Astrocyte of the cerebellum (primary cell): ENCODE measurements at regions of chr1 and their contacts with region 1.

Region 1: DNA sequence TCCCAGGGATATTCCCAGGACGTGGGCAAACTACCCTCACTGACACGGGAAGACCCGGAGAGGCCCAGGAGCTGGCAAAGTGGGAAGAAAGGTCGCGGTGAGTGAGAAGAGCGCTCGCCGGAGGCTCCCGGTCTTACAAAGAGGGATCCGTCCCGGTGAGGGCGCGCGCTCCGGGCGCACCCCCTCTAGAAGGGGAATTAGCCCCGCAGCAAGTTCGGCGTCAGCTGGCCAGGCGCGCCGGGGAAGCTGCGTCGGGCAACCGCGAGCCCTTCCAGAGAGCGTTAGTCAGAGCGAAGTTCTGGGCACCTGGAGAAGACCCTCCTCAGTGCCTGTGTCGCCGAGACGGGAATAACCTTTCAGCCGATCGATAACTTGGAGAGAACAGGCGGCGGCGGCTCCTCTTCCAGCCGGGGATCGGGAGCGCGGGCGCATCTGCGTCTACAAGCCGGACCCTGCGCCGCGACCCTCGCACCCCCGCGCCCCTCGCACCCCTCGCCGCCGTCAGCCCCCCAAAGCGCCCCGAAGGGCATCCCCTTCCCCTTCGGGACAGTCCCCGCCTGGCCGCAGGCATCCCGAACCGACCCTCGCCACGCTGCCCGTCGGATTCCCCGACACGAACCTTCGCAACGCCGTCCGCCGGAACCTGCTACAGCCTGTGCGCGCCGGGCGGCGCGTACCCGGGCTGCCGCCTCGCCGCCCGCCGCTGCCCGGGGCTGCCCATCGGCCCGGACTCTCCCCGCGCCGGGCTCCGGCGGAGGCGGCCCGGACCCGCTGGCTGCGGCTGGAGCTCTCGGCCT is 485 bp downstream of the SIPA1L2 start:
- DNase-seq: no peak
- H3K4me3 ChIP-seq: peak overlapping the region; percentile 50
- CTCF ChIP-seq: no peak

Region 2: DNA sequence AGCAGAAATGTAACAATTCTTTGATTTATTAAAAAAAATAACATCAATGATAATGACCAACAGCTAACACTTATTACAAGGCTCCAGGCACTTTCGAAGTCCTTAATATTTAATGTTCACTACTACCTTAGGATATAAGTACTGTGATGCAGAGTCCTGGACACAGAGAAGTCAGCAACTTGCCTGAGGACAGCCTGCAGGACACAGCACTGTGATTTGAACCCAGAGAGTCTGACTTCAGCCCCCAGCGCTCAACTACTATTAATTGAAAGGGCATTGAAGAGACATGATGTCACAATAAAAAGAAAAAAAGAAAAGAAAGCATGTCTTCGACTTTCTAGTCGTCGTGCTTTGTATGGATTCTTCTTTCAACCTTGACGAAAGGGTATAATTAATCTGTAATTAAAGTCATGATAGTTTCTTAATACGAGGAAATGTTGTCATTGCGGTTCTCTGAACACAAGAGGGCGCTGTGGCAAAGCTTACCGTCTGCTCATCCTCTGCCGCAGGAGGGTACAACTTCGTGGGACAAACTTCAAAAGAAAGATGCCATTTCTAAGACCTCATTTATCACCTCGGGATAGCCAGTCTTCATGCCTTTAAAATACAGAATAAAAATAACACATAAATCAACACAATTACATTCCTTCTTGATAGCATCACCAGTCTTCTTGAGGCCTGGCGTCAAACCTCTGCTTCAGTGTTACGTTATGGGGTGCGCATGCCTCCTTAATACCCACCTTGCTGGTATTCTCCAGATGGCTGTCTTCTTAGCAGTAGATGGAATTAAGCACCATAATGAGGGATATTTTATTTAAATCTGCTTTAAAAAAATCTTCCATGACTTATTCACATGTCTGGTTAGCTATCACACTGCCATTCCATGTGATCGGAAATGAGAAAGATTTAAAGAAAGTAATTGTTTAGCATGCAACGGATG is 762.8 kb before region 1 on chr1:
- in situ Hi-C with region 1: loop called (anchors 5 kb)
- DNase-seq: no peak
- H3K4me3 ChIP-seq: no peak overlapping the region
- CTCF ChIP-seq: peak; percentile 75

Region 3: GRCh38 chr1:232578651-232579195 is 50.7 kb before region 1 on chr1:
- in situ Hi-C with region 1: no loop called
- DNase-seq: no peak
- H3K4me3 ChIP-seq: no peak overlapping the region
- CTCF ChIP-seq: no peak

Region 4: DNA sequence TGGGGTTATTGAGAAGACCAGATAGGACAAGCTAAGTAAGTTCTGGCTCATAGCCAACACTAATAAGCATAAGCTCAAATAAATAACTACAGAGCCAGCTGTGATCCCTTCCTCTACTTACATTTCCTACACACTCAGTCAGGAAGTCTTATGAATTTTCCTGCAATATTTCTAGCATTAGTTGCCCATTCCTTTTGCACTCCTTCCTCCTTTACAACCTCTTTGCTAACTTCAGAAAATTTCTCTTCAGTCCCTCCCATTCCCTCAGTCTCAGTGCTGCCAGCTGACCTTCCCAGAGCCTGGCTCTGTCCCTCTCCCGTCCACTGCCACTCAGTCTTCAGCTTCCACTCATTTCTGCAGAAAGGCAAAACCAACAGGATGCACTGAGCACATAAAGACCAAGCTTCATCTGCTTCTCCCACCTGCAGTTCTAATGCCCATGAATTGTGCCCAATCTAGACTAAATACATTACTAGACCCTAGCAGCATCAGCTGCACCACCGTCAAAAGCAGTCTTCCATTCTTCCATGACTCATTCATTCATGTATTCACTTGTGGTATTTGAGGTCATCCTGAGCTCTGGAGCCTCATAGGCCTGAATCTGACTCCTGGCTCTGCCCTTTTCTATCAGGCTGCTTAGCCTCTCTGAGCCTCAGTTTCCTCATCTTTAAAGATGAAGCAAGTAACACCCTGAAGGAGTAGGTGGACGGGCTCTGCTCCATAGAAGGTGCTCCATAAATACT is 55.1 kb after region 1 on chr1:
- in situ Hi-C with region 1: no loop called
- DNase-seq: no peak
- H3K4me3 ChIP-seq: no peak overlapping the region
- CTCF ChIP-seq: no peak